ENCODE measurements at regions of chr14 and their contacts with region 1.

Region 1: DNA sequence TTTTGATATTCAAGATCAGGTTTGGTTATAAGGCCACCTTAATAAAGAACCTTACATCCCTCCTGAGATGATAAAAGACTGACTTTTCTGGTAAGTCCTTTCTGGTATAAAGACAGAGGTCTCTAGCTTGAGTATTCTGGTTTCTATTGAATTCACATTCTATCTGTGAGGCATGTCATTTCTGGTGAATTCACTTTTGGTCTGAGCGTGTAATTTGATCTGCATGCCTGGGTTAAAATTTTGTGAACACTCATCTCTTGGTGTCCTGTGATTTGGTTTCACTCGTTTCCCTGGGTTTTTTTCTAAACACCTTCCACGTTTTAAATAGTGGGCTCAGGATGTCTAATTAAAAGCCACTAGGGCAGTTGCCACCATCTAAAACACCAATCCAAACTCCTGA is 12.2 kb downstream of the EIF5 start:
- DNase-seq: no peak
- H3K4me3 ChIP-seq: no peak overlapping the region
- H3K27ac ChIP-seq: no peak overlapping the region
- H3K4me1 ChIP-seq: peaks cover 0 to 3% (median 0%) of the 10 kb centered on the region in 4 experiments; a peak in 6 of 7 replicates
- H3K27me3 ChIP-seq: no peaks in the 10 kb centered on the region
- CTCF ChIP-seq: no peak
- EP300 ChIP-seq: no peak
- POLR2A ChIP-seq: no peak
- RAD21 ChIP-seq: no peak

Region 2: DNA sequence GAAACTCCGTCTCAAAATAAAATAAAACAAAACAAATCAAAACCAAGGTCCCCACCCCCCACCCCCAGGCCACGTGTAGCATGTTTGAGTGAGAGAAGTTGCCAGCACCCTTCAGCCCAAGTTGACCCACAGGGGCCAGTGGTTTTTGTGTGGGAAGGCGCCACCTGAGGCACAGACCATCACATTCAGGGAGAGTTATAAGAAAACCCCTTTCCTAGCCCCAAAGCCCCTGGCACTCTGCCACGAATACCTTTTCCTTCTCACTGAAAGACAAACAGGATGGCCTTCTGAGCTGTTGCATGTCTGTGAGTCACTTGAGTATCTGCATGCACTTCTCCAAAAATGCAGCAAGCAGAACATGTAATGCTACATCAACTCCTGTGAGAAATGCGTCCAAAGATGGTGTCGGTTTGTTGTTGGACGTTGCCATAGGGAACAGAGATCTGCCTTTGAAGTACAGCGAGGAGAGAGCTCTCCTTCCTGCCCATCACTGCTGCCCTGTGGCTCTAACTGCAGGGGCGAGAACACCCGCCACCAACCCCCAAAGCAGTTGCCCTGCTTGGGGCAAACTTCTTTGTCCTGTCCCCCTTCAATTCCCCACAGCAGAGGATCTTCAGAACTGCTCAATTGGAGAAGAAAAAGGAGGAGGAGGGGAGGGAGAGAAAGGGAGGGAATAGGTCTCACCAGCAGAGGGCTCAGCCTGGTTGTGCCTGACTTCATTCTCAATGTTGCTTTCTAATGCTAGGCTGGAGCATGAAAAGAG is 571.7 kb before region 1 on chr14:
- CTCF ChIA-PET with region 1: no interaction called
- POLR2A ChIA-PET with region 1: no interaction called
- DNase-seq: peak; percentile 49 to 60
- H3K4me3 ChIP-seq: no peak overlapping the region
- H3K27ac ChIP-seq: no peak overlapping the region
- H3K4me1 ChIP-seq: peaks cover 3 to 13% (median 10%) of the 10 kb centered on the region in 4 experiments
- H3K27me3 ChIP-seq: peaks cover 0 to 10% (median 8%) of the 10 kb centered on the region in 4 experiments; a peak in 5 of 7 replicates
- CTCF ChIP-seq: peak; percentile 71 to 83 (median 73)
- EP300 ChIP-seq: no peak
- POLR2A ChIP-seq: no peak
- RAD21 ChIP-seq: peak; percentile 63 to 69

Region 3: DNA sequence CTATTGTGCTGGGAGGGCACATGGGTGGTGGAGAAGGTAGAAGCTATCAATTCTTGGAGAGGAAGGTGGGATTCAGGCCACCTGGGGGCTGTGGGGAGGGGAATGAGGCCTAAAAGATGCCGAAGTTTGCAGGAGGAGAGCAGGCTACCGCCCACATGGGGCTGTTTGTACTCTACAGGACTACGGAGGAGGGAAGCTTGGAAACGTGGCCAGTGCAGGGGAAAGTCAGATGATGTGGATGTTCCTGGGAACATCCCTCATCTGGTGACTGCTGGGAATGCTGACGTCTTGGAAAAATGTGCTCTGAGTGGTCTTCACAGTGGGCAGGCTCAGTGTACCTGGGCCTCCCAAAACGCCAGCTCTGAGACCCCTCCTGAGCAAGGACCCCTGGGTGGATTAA is 144.5 kb before region 1 on chr14:
- CTCF ChIA-PET with region 1: no interaction called
- POLR2A ChIA-PET with region 1: no interaction called
- DNase-seq: no peak
- H3K4me3 ChIP-seq: no peak overlapping the region
- H3K27ac ChIP-seq: no peak overlapping the region
- H3K4me1 ChIP-seq: peaks cover 0 to 5% (median 1%) of the 10 kb centered on the region in 4 experiments; a peak in 2 of 7 replicates
- H3K27me3 ChIP-seq: peaks cover 0 to 6% (median 3%) of the 10 kb centered on the region in 4 experiments; a peak in 4 of 7 replicates
- CTCF ChIP-seq: no peak
- EP300 ChIP-seq: no peak
- POLR2A ChIP-seq: no peak
- RAD21 ChIP-seq: no peak

Region 4: GRCh38 chr14:103333754-103334643 is 12.3 kb before region 1 on chr14 and contains the start of gene EIF5:
- CTCF ChIA-PET with region 1: interaction called, 4 read pairs
- POLR2A ChIA-PET with region 1: interaction called, 247 read pairs
- DNase-seq: peak; percentile 95 to 98
- H3K4me3 ChIP-seq: peak within 1 kb of the TSS; percentile 90 to 93 (median 92)
- H3K27ac ChIP-seq: peak within 1 kb of the TSS; percentile 98
- H3K4me1 ChIP-seq: peaks cover 0 to 8% (median 4%) of the 10 kb centered on the region in 4 experiments; a peak in 4 of 7 replicates
- H3K27me3 ChIP-seq: no peaks in the 10 kb centered on the region
- CTCF ChIP-seq: no peak
- EP300 ChIP-seq: no peak
- POLR2A ChIP-seq: peak; percentile 98 to 100
- RAD21 ChIP-seq: no peak; a peak in 1 of 4 replicates
- total RNA-seq, gene EIF5: 323 and 328 TPM in 2 replicates

Region 5: GRCh38 chr14:103372603-103373304 is 26.5 kb after region 1 on chr14:
- CTCF ChIA-PET with region 1: interaction called, 3 read pairs
- POLR2A ChIA-PET with region 1: interaction called, 37 read pairs
- DNase-seq: no peak
- H3K4me3 ChIP-seq: no peak overlapping the region
- H3K27ac ChIP-seq: peak overlapping the region; percentile 27; the same call in 1 of the 2 replicates
- H3K4me1 ChIP-seq: peaks cover 0 to 3% (median 2%) of the 10 kb centered on the region in 4 experiments; a peak in 2 of 7 replicates
- H3K27me3 ChIP-seq: no peaks in the 10 kb centered on the region
- CTCF ChIP-seq: no peak
- EP300 ChIP-seq: no peak
- POLR2A ChIP-seq: no peak
- RAD21 ChIP-seq: no peak

Region 6: DNA sequence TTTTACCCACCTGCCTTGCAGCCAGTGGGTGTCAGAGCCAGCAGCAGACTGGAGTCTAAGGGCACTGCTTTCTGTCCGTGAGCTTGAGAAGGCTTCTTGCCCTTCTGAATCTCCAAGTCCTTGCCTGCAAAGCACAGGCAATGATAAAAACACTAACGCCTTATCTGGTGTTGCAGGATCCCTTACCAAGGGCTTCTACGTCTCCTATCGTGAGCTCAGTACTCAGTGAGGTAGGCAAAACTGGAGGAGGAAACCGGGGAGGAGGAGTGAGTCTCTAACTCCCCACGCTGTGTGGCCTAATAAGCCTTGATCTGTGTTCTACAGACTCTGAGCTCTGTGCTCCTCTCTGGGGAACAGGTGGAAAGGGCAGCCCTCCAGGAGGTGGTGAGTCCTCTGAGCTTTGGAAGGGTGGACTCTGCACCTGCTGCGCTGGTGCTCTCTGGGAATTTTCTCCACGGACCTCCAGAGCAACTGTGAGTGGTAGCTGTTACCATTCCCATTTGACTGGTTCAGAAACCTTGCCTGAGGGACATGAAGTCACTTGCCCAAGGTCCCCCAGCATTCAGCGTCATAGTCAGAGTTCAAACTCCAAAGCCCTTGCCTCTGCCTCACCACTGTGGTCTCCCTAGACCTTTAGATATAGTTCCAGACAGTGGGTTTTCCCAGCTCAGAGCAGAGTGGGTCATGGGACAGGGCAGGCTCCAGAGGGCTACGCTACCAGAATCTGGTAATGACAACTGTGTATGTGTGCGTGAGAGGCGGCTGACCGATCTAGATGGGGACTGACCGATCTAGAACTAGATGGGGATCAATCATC is 32.0 kb after region 1 on chr14:
- CTCF ChIA-PET with region 1: interaction called, 3 read pairs
- POLR2A ChIA-PET with region 1: interaction called, 37 read pairs
- DNase-seq: no peak
- H3K4me3 ChIP-seq: no peak overlapping the region
- H3K27ac ChIP-seq: no peak overlapping the region
- H3K4me1 ChIP-seq: no peaks in the 10 kb centered on the region
- H3K27me3 ChIP-seq: 0 out of 7 replicates have a peak, but pooled peaks cover 0 to 4% (median 0%) of the 10 kb centered on the region in 4 experiments
- CTCF ChIP-seq: no peak
- EP300 ChIP-seq: no peak
- POLR2A ChIP-seq: no peak
- RAD21 ChIP-seq: no peak

Region 7: DNA sequence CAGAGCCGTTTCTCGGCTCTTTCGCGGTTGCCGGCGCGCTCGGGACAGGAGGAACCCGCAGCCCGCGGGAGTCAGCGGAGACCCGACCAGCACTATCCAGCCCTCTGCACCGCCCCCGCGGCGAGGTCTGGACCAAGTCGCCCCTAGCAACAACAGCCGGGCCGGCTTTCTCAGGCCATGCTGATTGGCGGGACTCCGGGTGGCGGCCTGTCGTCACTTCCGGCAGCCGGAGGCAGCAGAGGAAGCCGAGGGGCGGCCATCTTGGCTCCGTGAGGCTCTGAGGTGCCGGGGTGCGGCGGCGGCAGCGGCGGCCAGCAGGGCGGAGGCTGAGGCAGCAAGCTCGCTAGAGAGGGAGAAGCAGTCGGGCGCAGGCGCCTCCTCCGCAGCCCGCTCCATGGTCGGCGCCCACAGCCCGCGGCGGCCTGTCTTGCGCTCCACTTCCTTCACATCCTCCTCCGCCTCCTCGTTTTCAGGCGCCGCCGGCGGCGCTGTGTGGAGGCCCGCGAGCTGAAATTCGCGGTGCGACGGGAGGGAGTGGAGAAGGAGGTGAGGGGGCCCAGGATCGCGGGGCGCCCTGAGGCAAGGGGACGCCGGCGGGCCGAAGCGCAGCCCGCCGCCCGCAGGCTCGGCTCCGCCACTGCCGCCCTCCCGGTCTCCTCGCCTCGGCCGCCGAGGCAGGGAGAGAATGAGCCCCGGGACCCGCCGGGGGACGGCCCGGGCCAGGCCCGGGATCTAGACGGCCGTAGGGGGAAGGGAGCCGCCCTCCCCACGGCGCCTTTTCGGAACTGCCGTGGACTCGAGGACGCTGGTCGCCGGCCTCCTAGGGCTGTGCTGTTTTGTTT is 39.1 kb after region 1 on chr14 and contains the start of gene MARK3:
- CTCF ChIA-PET with region 1: interaction called, 35 read pairs
- POLR2A ChIA-PET with region 1: interaction called, 37 read pairs
- DNase-seq: peak; percentile 83 to 96
- H3K4me3 ChIP-seq: peak within 1 kb of the TSS; percentile 82 to 91 (median 88)
- H3K27ac ChIP-seq: peak within 1 kb of the TSS; percentile 92
- H3K4me1 ChIP-seq: peaks cover 0 to 8% (median 4%) of the 10 kb centered on the region in 4 experiments; a peak in 5 of 7 replicates
- H3K27me3 ChIP-seq: peaks cover 0 to 10% (median 5%) of the 10 kb centered on the region in 4 experiments; a peak in 3 of 7 replicates
- CTCF ChIP-seq: peak in 1 of 3 experiments; percentile 15; a peak in 1 of 4 replicates
- EP300 ChIP-seq: no peak
- POLR2A ChIP-seq: peak; percentile 42 to 82
- RAD21 ChIP-seq: no peak
- total RNA-seq, gene MARK3: 76.6 and 76.9 TPM in 2 replicates

Region 8: GRCh38 chr14:103391048-103391447 is 44.8 kb after region 1 on chr14:
- CTCF ChIA-PET with region 1: interaction called, 35 read pairs
- POLR2A ChIA-PET with region 1: interaction called, 26 read pairs
- DNase-seq: no peak
- H3K4me3 ChIP-seq: no peak overlapping the region
- H3K27ac ChIP-seq: no peak overlapping the region
- H3K4me1 ChIP-seq: peaks cover 0 to 6% (median 0%) of the 10 kb centered on the region in 4 experiments; a peak in 1 of 7 replicates
- H3K27me3 ChIP-seq: no peaks in the 10 kb centered on the region
- CTCF ChIP-seq: peak in 1 of 3 experiments; percentile 34; a peak in 2 of 4 replicates
- EP300 ChIP-seq: no peak
- POLR2A ChIP-seq: no peak
- RAD21 ChIP-seq: peak; percentile 16 to 35; a peak in 2 of 4 replicates

Measured in H1 (cell line).